ENCODE measurements at regions of chr13 and their contacts with region 1.

Region 1: GRCh38 chr13:49606747-49607648 is 21.3 kb upstream of the ARL11 start:
- DNase-seq: peak; percentile 82
- ATAC-seq: peak; percentile 99
- H3K4me3 Mint-ChIP-seq: no peak overlapping the region; the same call in 1 of the 2 replicates
- H3K27ac Mint-ChIP-seq: no peak overlapping the region
- H3K4me1 Mint-ChIP-seq: peaks cover 8% of the 10 kb centered on the region; the same call in 1 of the 2 replicates
- H3K27me3 Mint-ChIP-seq: no peaks in the 10 kb centered on the region
- CTCF ChIP-seq: 0 out of 2 replicates have a peak, but pooled peaks have one; percentile 19

Region 2: GRCh38 chr13:49300739-49301589 is 306.0 kb before region 1 on chr13:
- CTCF ChIA-PET with region 1: interaction called, 11 read pairs
- POLR2A ChIA-PET with region 1: no interaction called
- DNase-seq: peak; percentile 35
- ATAC-seq: peak; percentile 79
- H3K4me3 Mint-ChIP-seq: no peak overlapping the region
- H3K27ac Mint-ChIP-seq: no peak overlapping the region
- H3K4me1 Mint-ChIP-seq: peaks cover 35% of the 10 kb centered on the region
- H3K27me3 Mint-ChIP-seq: no peaks in the 10 kb centered on the region; the same call in 1 of the 2 replicates
- CTCF ChIP-seq: peak; percentile 84

Measured in WTC11 (cell line).